ENCODE measurements at regions of chr6 and their contacts with region 1.

Region 1: GRCh38 chr6:42745707-42746462 is at the start of gene TBCC:
- DNase-seq: peak; percentile 93 to 98
- ATAC-seq: peak; percentile 83
- total RNA-seq, gene TBCC: 21.3 to 26.4 TPM

Region 2: DNA sequence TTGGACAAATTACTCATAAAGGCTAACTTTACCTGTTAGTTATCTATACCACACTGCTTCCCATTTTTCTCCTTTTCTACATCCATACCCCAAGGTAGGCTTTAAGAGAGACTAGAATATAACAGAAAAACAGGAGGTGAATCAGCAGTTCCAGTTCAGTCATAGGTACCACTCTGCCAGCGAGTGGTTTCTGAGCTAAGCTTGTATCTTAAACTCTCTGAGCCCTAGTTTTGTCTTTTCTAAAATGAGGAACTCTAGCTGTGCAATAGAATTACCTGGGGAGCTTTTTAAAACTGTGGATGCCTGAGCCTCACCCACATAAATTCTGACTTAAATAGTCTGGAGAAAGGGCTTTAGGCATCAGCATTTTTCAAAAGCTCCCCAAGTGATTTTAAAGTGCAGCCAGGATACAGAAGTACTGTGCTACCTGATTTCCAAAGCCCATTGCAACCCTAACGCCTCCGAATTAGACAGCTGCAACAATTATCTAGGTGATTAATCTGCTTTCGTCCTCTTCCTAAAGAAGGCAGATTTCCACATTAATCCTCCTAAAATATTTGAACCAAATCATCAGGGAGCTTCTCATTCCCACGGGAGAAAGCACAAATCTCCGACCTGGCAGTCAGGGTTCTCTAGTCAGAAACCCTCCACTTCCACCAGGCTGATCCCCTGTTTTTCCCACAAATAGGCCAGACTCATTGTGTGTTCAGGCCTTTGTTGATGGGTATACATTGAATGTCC is 96.1 kb after region 1 on chr6:
- intact Hi-C with region 1: no loop called
- DNase-seq: no peak
- ATAC-seq: no peak

Region 3: DNA sequence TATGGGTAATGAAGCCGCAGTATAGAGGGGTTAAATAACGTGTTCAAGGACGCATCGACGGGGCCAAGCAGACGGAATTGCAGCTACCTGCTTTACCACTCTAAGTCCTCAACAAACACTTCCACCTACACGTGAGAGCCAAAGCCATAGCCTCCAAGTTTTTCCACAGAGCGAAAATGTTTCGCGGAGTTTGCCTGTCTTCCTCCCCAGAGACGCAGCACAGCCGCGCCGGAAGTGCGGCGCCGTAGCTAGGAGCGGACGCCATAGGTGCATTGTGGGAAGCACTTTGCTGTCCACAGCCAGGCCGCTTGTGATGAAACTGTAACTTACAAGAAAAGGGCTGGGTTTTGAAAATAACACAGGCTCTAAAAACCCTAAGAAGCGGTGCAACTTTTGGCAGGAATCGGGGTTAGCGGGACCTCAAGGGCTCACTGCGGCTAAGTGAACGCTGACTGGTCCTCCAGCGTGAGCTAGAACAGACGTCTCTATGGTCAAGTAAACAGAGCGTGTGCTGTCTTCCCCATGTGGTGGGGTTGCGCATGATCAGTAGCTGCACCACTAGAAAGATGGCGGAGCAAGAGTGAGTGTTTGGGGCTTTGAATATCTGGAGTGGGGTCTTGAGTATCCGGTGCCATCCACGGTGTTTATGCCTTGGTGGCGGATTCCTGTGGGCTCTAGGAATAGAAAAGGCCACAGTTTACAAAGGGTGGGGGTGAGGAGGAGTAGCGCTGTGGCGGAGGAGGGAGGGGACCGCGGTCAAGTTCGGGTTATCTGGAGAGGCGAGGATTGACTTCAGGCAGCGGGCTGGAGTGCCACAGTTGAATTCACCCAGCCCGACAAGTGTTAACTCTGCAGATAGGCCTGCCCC is 133.7 kb after region 1 on chr6 and contains the start of gene RPL7L1:
- intact Hi-C with region 1: loop called in 1 of 2 experiments (anchors 5 kb)
- DNase-seq: peak; percentile 85 to 86
- ATAC-seq: peak; percentile 94
- total RNA-seq, gene RPL7L1: 43.7 to 50.4 TPM